ENCODE measurements at regions of chr12 and their contacts with region 1.

Region 1: GRCh38 chr12:46661110-46661845 is 164.5 kb downstream of the SLC38A4 start:
- DNase-seq: peak; percentile 76
- H3K4me3 Mint-ChIP-seq: no peak overlapping the region
- H3K27ac Mint-ChIP-seq: peak overlapping the region; percentile 45
- H3K4me1 Mint-ChIP-seq: peaks cover 35% of the 10 kb centered on the region
- H3K27me3 Mint-ChIP-seq: no peaks in the 10 kb centered on the region

Region 2: DNA sequence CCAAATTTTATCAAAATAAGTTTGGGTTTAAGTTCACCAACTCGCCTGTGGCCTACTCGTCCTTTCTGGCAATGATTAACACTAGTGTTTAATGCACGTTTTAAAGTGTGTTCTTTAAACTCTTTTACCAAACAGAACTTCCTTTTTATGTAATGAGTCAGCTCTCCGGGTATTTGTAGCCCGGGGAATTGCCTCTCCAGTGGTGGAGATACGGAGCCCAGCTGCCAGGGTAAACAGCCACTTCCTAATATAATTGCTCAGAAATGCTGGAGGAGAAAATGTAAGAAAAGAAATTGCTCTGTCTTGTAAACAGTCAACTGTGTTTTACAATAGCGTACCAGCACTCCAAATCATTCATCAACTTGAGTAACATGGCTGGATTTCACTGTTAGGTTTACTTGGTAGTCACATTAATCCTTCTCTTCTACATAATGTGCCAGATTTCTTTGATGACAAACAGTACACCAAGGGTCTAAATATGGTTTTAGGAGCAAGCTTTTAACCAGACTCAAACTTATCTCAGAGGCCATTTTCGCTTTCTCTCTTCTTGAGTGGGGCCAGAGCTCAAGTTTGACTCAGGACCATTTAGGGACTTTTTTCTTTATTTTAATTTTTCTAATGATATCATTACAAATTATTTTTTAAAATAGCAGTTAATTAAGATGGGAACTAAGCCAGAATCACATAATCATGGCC is 187.5 kb before region 1 on chr12:
- intact Hi-C with region 1: loop called (anchors 5 kb)
- DNase-seq: peak; percentile 62
- H3K4me3 Mint-ChIP-seq: peak overlapping the region; percentile 61
- H3K27ac Mint-ChIP-seq: peak overlapping the region; percentile 74
- H3K4me1 Mint-ChIP-seq: peaks cover 41% of the 10 kb centered on the region
- H3K27me3 Mint-ChIP-seq: no peaks in the 10 kb centered on the region

Region 3: DNA sequence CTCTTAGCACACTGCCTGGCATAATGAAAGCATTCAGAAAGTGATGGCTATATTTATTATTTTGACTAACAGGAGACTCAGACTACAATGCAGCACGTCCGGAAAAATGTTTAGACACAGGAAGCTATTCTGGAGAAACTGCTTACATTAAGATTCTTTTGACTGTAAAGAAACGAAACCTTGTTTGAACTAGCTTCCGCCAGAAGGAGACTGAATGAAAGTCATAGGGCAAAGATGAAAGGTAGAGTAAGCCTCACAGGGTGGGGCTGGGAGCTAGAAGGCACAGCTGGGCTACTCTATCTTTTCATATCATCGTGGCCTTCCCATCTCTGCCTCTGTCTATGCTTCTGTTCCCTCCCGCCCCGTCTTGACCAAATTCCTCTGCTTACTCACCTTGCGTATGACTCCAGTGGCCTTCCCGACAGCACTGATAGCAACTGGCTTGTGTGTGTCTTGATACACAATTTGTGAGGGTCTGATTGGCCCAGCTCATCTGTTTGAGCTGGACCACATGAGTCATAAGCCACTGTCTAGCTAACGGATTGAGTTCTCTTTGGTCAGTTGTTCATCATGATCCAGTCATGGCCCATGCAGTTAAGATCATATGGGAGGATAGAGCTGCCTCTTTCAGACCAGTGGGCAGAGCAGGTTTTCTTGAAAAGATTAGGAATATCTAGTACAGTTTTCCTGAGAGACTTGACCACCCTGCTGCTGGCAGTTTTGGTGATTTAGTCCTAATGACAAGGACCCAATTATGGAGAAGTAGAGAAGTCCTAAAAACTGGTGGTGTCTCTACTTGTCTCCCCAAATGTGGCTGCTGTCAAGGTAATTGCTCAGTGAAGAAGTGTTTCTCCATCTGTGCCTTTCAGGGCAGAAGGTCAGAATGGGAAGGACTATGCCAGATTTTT is 137.2 kb before region 1 on chr12:
- intact Hi-C with region 1: loop called (anchors 1 kb)
- DNase-seq: peak; percentile 87
- H3K4me3 Mint-ChIP-seq: peak overlapping the region; percentile 76
- H3K27ac Mint-ChIP-seq: peak overlapping the region; percentile 94
- H3K4me1 Mint-ChIP-seq: peaks cover 51% of the 10 kb centered on the region
- H3K27me3 Mint-ChIP-seq: no peaks in the 10 kb centered on the region

Region 4: DNA sequence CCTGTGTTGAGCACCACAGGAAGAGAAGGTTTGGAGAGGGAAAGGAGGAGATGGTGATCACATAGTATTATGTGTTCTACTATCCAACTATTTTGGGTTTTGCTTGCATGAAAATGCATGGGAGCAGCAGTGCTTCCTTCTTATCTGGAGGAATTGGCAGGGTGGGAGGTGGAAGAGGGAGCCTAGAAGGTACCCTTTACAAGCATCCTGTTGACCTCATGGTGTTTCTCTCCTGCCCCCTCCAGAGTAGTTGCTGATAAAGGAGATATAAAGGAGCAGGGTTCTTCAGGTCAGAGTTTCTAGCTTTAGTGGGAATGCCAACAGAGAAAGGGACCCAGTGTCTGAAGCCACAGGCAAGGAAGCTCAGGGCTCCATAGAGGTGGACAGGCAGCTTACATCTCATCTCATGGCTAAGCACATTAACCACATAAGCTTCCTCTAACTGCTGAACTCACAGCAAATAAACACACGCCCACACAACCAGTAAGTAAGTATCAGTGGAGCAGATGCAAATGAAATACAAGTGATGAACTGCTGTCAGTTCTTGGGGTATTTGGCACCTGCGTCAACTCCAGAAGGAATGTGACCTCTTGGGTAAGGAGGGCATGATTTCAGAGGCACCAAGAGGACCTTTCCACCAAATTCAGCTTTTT is 114.5 kb before region 1 on chr12:
- intact Hi-C with region 1: loop called (anchors 2 kb)
- DNase-seq: peak; percentile 79
- H3K4me3 Mint-ChIP-seq: peak overlapping the region; percentile 55
- H3K27ac Mint-ChIP-seq: peak overlapping the region; percentile 88
- H3K4me1 Mint-ChIP-seq: peaks cover 62% of the 10 kb centered on the region
- H3K27me3 Mint-ChIP-seq: no peaks in the 10 kb centered on the region

Region 5: DNA sequence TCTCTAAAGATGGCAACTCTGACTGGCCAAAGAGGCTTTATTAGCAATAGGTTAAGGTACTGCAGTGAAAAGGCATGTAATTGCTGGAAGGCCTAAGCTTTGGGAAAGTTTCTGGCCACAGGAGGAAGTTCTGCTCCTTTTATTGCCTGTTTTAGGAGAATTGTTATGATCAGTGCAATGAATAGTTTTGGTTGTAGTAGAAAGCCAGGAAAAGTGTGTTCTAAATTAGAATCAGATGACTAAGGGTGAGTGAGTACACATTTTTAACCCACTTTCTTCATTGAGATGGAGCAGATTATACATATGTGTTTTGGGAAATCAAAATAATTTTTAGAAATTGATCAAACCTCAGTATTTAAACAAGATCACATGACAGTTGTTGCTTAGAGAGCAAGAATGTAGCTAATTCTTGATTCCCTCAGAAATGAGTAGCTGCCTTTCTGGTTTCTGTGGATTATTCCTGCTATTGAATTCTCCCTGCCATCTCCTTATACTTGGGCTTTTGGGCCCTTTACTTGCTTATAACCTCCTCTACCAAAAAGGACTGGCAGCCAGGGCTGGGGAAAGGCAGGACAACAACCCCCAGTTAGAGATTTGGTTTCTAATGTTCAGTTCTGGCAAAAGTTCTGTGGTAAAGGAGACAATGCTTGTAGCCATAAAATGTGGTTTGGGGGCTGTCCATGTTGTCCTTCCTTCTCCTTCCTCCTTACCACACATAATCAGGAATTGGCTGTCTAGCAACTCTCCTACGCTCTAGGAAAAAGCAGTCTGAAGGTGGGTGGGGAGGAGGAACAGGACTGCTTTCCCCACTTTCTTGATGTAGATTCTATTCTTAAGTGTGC is 52.6 kb before region 1 on chr12:
- intact Hi-C with region 1: loop called (anchors 1 kb)
- DNase-seq: no peak
- H3K4me3 Mint-ChIP-seq: peak overlapping the region; percentile 69
- H3K27ac Mint-ChIP-seq: peak overlapping the region; percentile 67
- H3K4me1 Mint-ChIP-seq: peaks cover 24% of the 10 kb centered on the region
- H3K27me3 Mint-ChIP-seq: no peaks in the 10 kb centered on the region

Region 6: GRCh38 chr12:46711756-46712155 is 50.5 kb after region 1 on chr12:
- intact Hi-C with region 1: no loop called
- DNase-seq: no peak
- H3K4me3 Mint-ChIP-seq: no peak overlapping the region
- H3K27ac Mint-ChIP-seq: no peak overlapping the region
- H3K4me1 Mint-ChIP-seq: no peaks in the 10 kb centered on the region
- H3K27me3 Mint-ChIP-seq: peaks cover 3% of the 10 kb centered on the region